GM10248 (cell line): ENCODE measurements at regions of chr7 and their contacts with region 1.

Region 1: GRCh38 chr7:88243345-88243909 is 23.6 kb upstream of the SRI start:
- DNase-seq: peak; percentile 21
- CTCF ChIP-seq: peak; percentile 66

Region 2: DNA sequence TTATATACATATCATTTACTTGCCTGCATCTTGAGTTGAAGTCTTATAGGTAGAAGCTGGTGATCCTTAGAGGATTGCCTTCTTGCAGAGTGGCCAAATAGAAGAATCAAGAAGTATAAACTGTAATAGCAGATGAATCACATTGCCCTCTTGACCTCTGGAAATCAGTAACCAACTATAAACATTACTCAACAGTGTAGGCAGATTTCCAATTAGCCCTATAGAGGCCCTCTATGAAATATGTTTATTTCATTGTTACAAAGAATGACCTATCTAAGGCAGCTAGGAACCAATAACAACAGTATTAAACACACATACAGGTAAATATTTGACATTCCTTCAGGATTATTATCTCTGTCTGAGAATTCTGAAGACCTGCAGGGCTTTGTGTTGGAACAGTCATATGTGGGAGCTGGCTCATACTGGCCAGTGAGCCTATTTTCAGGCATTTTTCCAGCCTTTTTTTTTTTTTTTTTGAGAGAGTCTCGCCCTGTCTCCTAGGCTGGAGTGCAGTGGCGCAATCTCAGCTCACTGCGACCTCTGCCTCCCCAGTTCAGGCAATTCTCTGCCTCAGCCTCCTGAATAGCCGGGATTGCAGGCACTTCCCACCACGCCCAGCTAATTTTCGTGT is 16.4 kb before region 1 on chr7:
- CTCF ChIA-PET with region 1: interaction called, 10 read pairs
- POLR2A ChIA-PET with region 1: no interaction called
- DNase-seq: no peak
- CTCF ChIP-seq: no peak

Region 3: GRCh38 chr7:88254716-88255115 is 11.3 kb after region 1 on chr7:
- CTCF ChIA-PET with region 1: interaction called, 11 read pairs
- POLR2A ChIA-PET with region 1: no interaction called
- DNase-seq: no peak
- CTCF ChIP-seq: no peak

Region 4: GRCh38 chr7:88357781-88358525 is 114.5 kb after region 1 on chr7:
- CTCF ChIA-PET with region 1: interaction called, 24 read pairs
- POLR2A ChIA-PET with region 1: no interaction called
- DNase-seq: no peak
- CTCF ChIP-seq: peak; percentile 68

Region 5: GRCh38 chr7:88835147-88835728 is 591.8 kb after region 1 on chr7:
- CTCF ChIA-PET with region 1: interaction called, 11 read pairs
- POLR2A ChIA-PET with region 1: no interaction called
- DNase-seq: peak; percentile 12
- CTCF ChIP-seq: peak; percentile 53